Mucosa of descending colon (tissue), 3 donors: ENCODE measurements at regions of chr1 and their contacts with region 1.

Region 1: GRCh38 chr1:107771377-107771776 is 193.6 kb downstream of the VAV3 start:
- DNase-seq: no peak
- ATAC-seq: no peak
- H3K4me3 ChIP-seq: no peak overlapping the region
- H3K4me1 ChIP-seq: no peaks in the 10 kb centered on the region
- CTCF ChIP-seq: no peak

Region 2: DNA sequence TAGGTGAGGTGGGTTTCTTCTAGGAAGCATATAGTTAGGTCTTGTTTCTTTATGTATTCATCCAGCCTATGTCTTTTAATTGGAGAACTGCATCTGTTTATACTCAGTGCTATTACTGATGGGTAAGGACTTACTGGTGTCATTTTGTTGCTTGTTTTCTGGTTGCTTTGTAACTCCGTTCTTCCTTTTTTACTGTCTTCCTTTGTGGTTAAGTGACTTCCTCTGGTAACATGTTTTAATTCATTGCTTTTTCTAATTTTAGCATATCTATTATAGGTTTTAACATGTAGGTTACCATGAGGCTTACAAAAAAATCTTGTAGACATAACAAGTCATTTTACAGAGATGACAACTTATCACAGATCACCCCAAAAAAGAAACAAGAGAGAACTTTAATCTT is 32.8 kb after region 1 on chr1:
- intact Hi-C with region 1: no loop called
- DNase-seq: no peak
- ATAC-seq: no peak
- H3K4me3 ChIP-seq: no peak overlapping the region
- H3K4me1 ChIP-seq: no peaks in the 10 kb centered on the region
- CTCF ChIP-seq: no peak

Region 3: GRCh38 chr1:108130794-108131193 is 359.4 kb after region 1 on chr1:
- intact Hi-C with region 1: loop called in 1 of 2 experiments (anchors 5 kb)
- DNase-seq: no peak
- ATAC-seq: no peak
- H3K4me3 ChIP-seq: no peak overlapping the region
- H3K4me1 ChIP-seq: no peaks in the 10 kb centered on the region
- CTCF ChIP-seq: no peak